CD4-positive, alpha-beta memory T cell (primary cell): ENCODE measurements at regions of chr5 and their contacts with region 1.

Region 1: GRCh38 chr5:80181618-80182211 is 74.1 kb downstream of the SERINC5 start:
- DNase-seq: peak; percentile 79 to 84 (median 81)
- H3K4me3 ChIP-seq: peak overlapping the region in 1 of 2 donors; percentile 5
- H3K4me3 Mint-ChIP-seq: peak overlapping the region; percentile 28 to 76 (median 69)
- H3K27ac ChIP-seq: peak overlapping the region; percentile 48
- H3K27ac Mint-ChIP-seq: peak overlapping the region; percentile 89 to 97 (median 95)
- H3K4me1 ChIP-seq: peaks cover 97% of the 10 kb centered on the region
- H3K4me1 Mint-ChIP-seq: peaks cover 67 to 91% (median 84%) of the 10 kb centered on the region in 4 donors
- H3K27me3 ChIP-seq: no peaks in the 10 kb centered on the region
- H3K27me3 Mint-ChIP-seq: no peaks in the 10 kb centered on the region

Region 2: GRCh38 chr5:80134879-80135278 is 46.8 kb before region 1 on chr5:
- CTCF ChIA-PET with region 1: no interaction called
- POLR2A ChIA-PET with region 1: interaction called, 57 read pairs
- intact Hi-C with region 1: loop called (anchors 1 kb)
- DNase-seq: no peak
- H3K4me3 ChIP-seq: no peak overlapping the region
- H3K4me3 Mint-ChIP-seq: peak overlapping the region; percentile 7 to 87 (median 77)
- H3K27ac ChIP-seq: peak overlapping the region; percentile 54
- H3K27ac Mint-ChIP-seq: peak overlapping the region; percentile 69 to 97 (median 92)
- H3K4me1 ChIP-seq: peaks cover 86% of the 10 kb centered on the region
- H3K4me1 Mint-ChIP-seq: peaks cover 70 to 88% (median 80%) of the 10 kb centered on the region in 4 donors
- H3K27me3 ChIP-seq: no peaks in the 10 kb centered on the region
- H3K27me3 Mint-ChIP-seq: no peaks in the 10 kb centered on the region

Region 3: GRCh38 chr5:80153586-80154126 is 28.1 kb before region 1 on chr5:
- CTCF ChIA-PET with region 1: interaction called, 3 read pairs
- POLR2A ChIA-PET with region 1: interaction called, 7 read pairs
- intact Hi-C with region 1: loop called (anchors 2 kb)
- DNase-seq: peak in 4 of 5 donors; percentile 45 to 58 (median 50)
- H3K4me3 ChIP-seq: no peak overlapping the region
- H3K4me3 Mint-ChIP-seq: peak overlapping the region in 7 of 8 donors; percentile 66 to 85 (median 79)
- H3K27ac ChIP-seq: no peak overlapping the region
- H3K27ac Mint-ChIP-seq: peak overlapping the region; percentile 83 to 97 (median 96)
- H3K4me1 ChIP-seq: peaks cover 57% of the 10 kb centered on the region
- H3K4me1 Mint-ChIP-seq: peaks cover 48 to 81% (median 62%) of the 10 kb centered on the region in 4 donors
- H3K27me3 ChIP-seq: no peaks in the 10 kb centered on the region
- H3K27me3 Mint-ChIP-seq: no peaks in the 10 kb centered on the region

Region 4: DNA sequence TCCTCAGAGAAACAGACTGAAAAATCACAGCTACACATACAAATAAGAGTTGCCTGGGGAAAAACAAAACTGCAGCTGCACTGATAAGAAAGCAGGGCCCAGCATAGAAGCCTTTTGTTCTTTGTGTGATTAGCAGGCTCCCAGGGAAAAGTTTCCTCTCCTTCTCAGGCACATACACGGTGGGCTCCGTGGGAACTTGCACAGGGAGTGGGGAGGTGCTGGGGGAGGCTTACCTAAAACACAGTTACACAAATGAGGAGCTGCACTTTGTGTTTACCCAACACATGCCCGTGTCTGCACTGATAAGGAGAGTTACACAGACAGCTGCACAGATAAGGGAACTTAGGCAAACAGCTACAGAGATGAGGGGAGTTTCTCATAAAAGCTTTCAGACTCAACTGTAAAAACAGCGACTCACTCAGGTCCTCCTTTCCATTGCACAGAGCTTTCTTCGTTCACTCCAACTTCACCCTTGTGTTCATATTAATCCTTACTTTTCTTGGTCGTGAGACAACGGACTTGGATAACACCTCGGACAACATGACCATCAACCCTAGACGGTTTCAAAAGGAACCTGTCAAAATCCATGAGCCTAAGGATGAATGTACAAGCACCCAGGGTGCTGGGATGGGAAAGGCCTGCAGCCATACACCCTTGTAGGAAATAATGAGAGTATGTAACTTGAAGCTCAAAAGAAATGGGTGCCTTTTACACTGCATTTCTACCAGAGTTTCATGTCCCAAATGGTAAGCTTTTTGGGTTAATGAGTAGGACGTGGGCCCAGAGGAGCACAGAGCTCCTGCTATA is 23.3 kb after region 1 on chr5:
- CTCF ChIA-PET with region 1: interaction called, 7 read pairs
- POLR2A ChIA-PET with region 1: interaction called, 21 read pairs
- intact Hi-C with region 1: no loop called
- DNase-seq: no peak
- H3K4me3 ChIP-seq: no peak overlapping the region
- H3K4me3 Mint-ChIP-seq: peak overlapping the region; percentile 40 to 71 (median 58)
- H3K27ac ChIP-seq: peak overlapping the region; percentile 16
- H3K27ac Mint-ChIP-seq: peak overlapping the region; percentile 81 to 99 (median 88)
- H3K4me1 ChIP-seq: peaks cover 82% of the 10 kb centered on the region
- H3K4me1 Mint-ChIP-seq: peaks cover 72 to 94% (median 82%) of the 10 kb centered on the region in 4 donors
- H3K27me3 ChIP-seq: no peaks in the 10 kb centered on the region
- H3K27me3 Mint-ChIP-seq: no peaks in the 10 kb centered on the region

Region 5: DNA sequence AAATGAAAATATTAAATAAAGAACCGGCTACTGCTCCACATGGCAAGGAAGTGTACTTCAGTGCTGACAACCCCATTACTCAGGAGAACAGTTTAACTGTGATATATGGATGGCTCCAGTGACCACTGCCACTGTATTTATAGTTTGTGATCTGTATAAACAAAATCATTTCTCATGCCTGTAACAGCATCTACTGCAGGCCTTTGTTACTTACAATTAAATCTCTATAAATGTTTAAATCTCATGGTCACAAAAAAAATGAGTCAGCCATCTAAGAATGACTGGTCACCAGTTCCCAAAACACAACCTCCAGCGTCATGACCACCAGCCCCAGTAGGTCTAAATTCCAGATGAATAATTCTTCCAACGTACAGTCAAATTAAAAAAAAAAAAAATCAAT is 49.5 kb after region 1 on chr5:
- CTCF ChIA-PET with region 1: no interaction called
- POLR2A ChIA-PET with region 1: no interaction called
- intact Hi-C with region 1: no loop called
- DNase-seq: no peak
- H3K4me3 ChIP-seq: no peak overlapping the region
- H3K4me3 Mint-ChIP-seq: peak overlapping the region in 7 of 8 donors; percentile 44 to 76 (median 51)
- H3K27ac ChIP-seq: no peak overlapping the region
- H3K27ac Mint-ChIP-seq: peak overlapping the region; percentile 37 to 90 (median 65)
- H3K4me1 ChIP-seq: peaks cover 93% of the 10 kb centered on the region
- H3K4me1 Mint-ChIP-seq: peaks cover 47 to 86% (median 70%) of the 10 kb centered on the region in 4 donors
- H3K27me3 ChIP-seq: no peaks in the 10 kb centered on the region
- H3K27me3 Mint-ChIP-seq: no peaks in the 10 kb centered on the region